Sciatic nerve (tissue), 2 donors: ENCODE measurements at regions of chr15 and their contacts with region 1.

Region 1: DNA sequence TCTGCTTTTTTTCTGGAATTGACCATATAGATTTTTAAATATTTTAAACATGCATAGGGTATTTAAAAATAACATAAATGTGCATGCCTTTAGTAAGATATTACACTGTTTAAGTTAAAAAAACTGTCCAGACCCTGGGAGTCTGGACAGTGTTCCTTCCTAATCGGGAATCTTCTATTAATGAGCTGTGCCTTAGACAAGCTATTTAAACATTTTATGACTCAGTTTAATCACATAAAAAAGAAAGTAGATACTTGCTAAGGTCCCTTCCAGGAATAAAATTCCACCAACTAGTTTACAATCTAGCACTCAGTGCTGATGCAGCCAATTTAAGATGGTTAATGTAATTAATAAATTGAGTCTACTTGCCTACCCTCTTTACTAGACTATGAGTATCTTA is 140.4 kb upstream of the DPH6 start:
- DNase-seq: no peak
- ATAC-seq: no peak

Region 2: DNA sequence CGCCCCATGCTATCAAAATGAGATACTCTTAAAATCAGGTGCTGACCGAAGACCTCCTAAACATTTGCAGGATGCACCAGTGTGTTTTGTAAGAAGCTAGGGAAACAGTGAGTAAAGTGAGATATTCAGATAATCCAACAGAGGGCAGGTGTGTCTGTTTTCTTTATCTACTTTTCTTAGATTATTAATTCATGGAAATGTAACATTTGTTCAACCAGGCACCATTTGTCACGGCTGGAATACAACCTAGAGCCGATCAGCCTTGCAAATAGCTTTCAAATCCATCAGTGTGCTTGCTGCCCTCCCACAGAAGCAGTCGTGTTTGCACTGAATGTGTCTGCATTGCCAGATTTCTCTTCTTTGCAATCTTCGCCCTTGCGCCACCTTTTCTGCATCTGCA is 1920.0 kb before region 1 on chr15:
- intact Hi-C with region 1: loop called (anchors 5 kb)
- DNase-seq: no peak
- ATAC-seq: no peak

Region 3: DNA sequence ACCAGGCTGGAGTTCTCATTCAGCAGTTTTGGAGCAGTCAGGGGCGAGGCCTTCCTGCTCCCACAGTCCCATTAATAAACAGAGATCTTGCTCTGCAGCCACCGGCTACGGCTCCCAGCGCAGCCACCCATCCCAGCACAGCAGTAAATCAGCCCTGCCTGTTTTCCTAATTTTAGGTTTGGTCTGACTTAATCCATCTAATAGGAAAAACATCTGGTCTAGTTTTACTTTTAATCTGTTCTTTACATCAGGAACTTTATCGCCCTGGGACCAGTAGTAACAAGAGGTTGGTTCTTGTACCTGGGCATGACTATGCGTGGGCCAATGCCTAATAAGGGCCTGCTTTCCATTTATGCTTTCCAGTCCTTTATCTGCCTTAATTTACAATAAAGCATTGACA is 123.7 kb after region 1 on chr15:
- intact Hi-C with region 1: no loop called
- DNase-seq: no peak
- ATAC-seq: no peak